ENCODE measurements at regions of chr15 and their contacts with region 1.

Region 1: DNA sequence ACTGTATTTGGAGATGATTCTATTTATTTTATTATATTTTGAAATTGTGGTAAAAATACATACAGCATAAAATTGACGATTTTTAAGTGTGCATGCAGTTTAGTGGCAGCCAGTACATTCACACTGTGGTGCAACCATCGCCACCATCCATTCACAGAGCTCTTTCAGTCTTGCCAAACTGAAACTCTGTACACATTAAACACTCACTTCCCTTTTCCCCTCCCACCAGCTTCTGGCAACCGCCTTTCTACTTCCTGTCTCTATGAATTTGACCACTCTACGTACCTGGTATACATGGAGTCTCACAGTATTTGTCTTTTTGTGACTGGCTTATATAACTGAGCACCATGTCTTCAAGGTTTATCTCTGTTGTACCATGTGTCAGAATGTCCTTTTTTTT is 303.3 kb upstream of the ATP10A start:
- DNase-seq: no peak
- H3K4me3 ChIP-seq: no peak overlapping the region
- H3K27ac ChIP-seq: no peak overlapping the region
- H3K4me1 ChIP-seq: no peaks in the 10 kb centered on the region
- H3K27me3 ChIP-seq: no peaks in the 10 kb centered on the region
- CTCF ChIP-seq: no peak
- POLR2A ChIP-seq: no peak

Region 2: DNA sequence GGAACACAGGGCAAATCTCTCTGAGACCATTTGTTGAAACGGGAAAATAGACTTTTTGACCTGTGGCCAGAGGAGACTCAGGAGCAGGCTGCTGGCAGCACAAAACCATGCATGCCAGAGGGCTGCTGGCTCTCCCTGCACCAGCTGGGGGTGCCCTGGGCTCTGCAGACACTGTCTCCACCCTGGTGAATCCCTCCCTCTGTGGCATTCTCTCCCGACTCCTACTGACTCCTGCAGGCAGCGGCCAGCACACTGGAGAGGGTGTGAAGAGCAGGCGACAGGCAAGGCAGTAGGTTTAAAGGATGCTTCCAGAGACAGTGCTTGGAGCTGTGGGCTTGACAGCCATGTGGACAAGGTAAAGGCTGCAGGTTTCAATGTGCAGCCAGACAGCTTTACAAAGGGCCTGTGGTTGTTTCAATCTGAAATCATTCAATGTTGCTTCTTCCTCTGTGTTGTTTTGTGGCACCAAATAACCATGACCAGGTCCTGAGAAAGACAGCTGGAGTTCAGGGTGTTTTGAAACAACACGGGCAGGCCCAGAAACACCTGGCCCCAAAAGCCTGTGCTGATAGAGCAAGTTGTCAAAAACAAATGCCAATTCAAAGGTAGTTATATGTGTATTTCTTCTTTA is 127.7 kb after region 1 on chr15:
- intact Hi-C with region 1: no loop called
- DNase-seq: no peak
- H3K4me3 ChIP-seq: no peak overlapping the region
- H3K27ac ChIP-seq: no peak overlapping the region
- H3K4me1 ChIP-seq: no peaks in the 10 kb centered on the region
- H3K27me3 ChIP-seq: no peaks in the 10 kb centered on the region
- CTCF ChIP-seq: no peak
- POLR2A ChIP-seq: no peak

Region 3: DNA sequence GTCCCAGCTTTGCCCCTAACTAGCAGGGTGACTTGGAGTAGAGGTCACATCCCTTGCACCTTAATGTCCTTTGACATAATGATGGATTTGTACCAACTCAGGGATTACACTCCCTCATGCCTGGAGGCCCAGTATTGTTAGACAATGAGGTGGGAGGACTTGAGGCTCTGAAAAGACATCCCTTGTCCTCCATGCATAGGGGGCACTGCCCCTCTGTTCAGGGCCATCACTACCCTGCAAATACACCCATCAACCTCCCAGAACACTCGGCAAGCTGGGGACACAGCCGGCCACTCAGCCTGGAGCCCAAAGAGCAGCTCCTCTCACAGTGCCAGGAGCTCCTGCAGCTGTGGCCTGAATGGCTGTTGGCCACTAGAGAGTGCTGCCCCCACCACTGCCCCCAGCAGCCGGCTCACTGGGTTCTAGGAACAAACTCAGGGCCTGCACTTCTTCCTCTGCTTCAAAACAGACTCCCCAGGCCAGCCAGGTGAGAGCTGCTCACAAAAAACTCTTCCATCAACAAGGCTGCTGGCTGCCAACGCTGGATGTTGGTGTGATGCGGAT is 516.3 kb after region 1 on chr15:
- intact Hi-C with region 1: no loop called
- DNase-seq: no peak
- H3K4me3 ChIP-seq: no peak overlapping the region
- H3K27ac ChIP-seq: no peak overlapping the region
- H3K4me1 ChIP-seq: no peaks in the 10 kb centered on the region
- H3K27me3 ChIP-seq: no peaks in the 10 kb centered on the region
- CTCF ChIP-seq: no peak
- POLR2A ChIP-seq: no peak

Region 4: DNA sequence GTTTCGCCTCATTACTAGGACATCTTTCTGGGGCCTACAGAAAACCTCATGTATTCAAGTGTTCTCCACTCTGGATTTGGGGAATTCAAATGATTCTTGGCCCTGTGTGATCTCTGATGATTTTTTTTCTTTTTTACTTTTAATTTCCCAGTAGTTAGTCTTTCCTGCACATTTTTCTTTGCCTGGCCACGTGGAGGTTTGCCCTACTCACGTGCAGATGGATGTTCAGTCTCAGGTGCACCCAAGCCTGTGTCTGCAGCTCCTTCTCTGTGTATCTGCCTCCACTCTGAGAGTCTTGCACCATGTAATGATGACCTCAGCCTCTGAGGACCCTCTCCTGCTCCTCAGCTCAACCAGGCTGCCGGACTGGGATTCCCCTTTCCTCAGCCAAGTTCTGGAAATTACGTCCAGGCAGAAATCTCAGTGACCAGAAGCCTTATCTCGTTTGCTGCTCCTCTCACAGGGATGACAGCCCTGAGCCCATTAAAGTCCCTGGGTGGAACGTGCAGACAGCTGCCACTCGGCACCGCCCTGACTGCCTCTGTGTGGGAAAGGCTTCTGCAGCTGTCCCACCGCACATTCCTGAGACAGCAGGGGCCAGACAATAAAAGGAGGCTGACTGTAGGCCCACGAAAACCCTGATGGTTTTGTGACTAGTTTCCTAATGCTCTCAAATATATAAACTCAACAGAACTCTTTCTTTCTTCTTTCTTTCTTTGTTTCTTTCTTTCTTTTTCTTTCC is 637.8 kb after region 1 on chr15:
- intact Hi-C with region 1: loop called (anchors 5 kb)
- DNase-seq: no peak
- H3K4me3 ChIP-seq: no peak overlapping the region
- H3K27ac ChIP-seq: no peak overlapping the region
- H3K4me1 ChIP-seq: no peaks in the 10 kb centered on the region
- H3K27me3 ChIP-seq: no peaks in the 10 kb centered on the region
- CTCF ChIP-seq: no peak
- POLR2A ChIP-seq: no peak

Measured in uterus (tissue), 4 donors.